Sigmoid colon (tissue), 7 donors: ENCODE measurements at regions of chr3 and their contacts with region 1.

Region 1: DNA sequence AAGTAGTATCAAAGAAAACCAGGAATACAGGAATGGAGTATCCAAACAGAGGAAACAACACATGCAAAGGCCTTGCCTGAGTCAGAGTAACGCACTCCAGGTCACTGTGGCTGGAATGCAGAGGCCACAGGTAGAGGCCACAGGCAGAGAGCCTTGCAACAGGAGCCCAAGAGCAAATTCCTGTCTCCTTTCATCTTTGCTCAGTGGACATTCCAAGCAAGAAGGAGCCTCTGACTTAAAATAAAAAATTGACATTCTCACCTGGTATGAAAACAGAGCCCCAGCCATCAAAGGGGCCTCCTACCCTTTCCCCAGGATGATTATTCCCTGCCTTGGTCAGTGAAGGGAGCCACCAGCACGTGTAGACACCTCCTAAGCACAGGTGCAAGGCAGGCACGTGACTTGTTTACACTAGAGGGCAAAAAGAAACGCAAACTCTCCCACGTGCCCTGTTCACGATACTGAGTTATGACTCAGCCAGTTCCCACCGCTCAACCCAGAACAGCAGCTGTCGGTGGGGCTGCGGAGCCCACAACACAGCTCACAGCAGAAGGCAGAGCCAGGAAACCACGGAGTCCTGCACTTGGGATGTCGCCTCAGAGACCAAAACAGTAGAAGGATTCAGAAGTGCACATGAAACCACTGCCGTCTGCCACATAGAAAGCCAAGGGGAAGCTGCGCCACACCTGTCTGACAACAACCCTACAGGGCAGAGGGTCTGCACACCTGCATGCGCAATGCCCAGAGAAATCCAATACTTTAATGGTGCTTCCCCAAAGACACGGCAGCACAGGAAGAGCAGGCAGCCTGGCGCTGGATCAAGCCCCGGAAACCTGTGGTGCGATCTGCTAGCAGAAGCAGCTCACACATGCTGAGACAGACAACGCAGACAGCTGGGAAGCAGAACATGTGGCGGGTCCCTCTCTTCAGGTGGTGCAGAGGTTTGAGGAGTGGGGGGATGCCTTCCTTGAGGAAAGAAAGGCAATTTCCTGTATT is 52.1 kb downstream of the ITGB5 start:
- DNase-seq: peak; percentile 78
- H3K4me3 ChIP-seq: peak overlapping the region in 1 of 4 donors; percentile 22
- H3K27ac ChIP-seq: peak overlapping the region; percentile 70 to 89 (median 76)
- H3K4me1 ChIP-seq: peaks cover 0 to 74% (median 56%) of the 10 kb centered on the region in 4 donors
- H3K27me3 ChIP-seq: no peaks in the 10 kb centered on the region
- CTCF ChIP-seq: no peak
- EP300 ChIP-seq: peak in 1 of 4 donors; percentile 35
- POLR2A ChIP-seq: no peak

Region 2: GRCh38 chr3:124559881-124560574 is 275.0 kb before region 1 on chr3:
- intact Hi-C with region 1: no loop called
- DNase-seq: peak; percentile 75
- H3K4me3 ChIP-seq: no peak overlapping the region
- H3K27ac ChIP-seq: peak overlapping the region; percentile 50 to 80 (median 70)
- H3K4me1 ChIP-seq: peaks cover 0 to 28% (median 22%) of the 10 kb centered on the region in 4 donors
- H3K27me3 ChIP-seq: no peaks in the 10 kb centered on the region
- CTCF ChIP-seq: peak; percentile 41 to 87 (median 66)
- EP300 ChIP-seq: no peak
- POLR2A ChIP-seq: no peak

Region 3: DNA sequence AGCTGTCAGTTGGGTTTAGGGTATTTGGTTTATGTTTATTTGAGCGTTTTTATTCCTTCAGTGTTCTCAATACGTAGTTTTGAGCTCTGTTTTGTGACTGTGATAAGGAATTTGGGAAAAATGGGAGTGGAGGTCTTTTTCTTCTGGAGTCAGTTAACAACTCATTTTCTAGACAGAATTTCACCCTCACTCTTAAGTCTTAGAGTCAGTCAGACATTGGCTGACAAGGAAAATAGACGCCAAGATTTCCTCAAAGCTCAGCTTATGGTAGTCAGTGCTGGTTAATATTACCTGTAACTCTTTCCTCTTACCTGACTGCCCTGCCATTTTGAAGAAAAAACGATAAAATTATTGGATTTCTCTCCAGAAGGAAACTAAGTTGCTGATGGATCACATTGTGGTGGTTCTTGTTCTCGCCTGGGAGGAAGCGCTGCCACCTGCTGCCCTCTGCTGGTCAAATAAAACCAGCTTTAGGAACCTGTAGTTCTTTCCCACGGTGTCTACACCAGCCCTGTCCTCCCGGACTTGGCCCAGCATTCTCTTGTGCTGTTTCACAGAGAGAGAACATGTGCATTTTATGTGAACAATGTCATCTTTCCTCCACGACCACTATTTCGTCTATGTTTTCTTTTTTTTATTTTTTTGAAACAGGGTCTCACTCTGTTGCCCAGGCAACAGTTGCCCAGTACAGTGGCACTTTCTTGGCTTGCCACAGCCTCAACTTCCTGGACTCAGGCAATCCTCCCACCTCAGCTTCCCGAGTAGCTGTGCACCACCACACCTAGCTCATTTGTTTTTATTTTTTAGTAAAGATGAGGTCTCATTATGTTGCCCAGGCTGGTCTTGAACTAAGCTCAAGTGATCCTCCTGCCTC is 146.2 kb before region 1 on chr3:
- intact Hi-C with region 1: no loop called
- DNase-seq: peak; percentile 83
- H3K4me3 ChIP-seq: no peak overlapping the region
- H3K27ac ChIP-seq: no peak overlapping the region
- H3K4me1 ChIP-seq: peaks cover 0 to 3% (median 0%) of the 10 kb centered on the region in 4 donors
- H3K27me3 ChIP-seq: no peaks in the 10 kb centered on the region
- CTCF ChIP-seq: peak; percentile 47 to 83 (median 68)
- EP300 ChIP-seq: no peak
- POLR2A ChIP-seq: no peak

Region 4: DNA sequence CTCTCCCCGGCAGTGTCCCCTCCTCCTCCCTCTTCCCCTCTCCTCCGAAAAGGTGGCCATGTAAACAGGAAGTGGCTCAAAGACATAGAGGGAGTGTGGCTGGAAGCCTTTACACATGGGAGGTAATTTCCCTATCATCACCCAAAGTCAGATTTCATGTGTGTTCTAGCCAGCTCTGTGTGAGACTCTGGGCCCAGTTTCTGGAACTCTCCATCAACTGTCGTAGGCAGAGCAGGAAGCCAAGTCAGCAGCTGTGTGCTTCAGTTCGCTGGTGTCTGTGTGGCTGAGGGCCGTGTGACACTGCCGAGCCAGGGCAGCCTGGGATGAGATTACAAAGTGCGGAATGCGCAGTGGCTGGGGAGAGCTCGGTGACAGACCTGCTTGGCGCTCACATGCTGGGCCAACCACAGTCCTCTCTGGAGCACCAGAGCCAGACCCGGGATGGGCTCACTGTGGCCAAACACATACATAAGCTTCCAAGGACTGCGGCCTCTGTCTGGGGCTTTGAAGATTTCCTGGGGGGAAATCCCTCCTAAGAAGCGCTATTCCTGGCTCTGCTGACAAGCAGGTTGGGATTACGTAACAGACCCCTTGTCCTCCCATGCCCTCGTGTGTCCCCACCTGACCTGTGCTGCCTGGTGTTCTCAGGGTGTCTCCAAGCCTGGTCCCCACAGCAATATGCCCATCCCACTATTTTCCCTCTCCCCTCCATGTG is 54.1 kb before region 1 on chr3:
- intact Hi-C with region 1: loop called (anchors 5 kb)
- DNase-seq: peak; percentile 91
- H3K4me3 ChIP-seq: peak overlapping the region in 1 of 4 donors; percentile 6
- H3K27ac ChIP-seq: peak overlapping the region; percentile 81 to 94 (median 92)
- H3K4me1 ChIP-seq: peaks cover 0 to 69% (median 62%) of the 10 kb centered on the region in 4 donors
- H3K27me3 ChIP-seq: no peaks in the 10 kb centered on the region
- CTCF ChIP-seq: no peak
- EP300 ChIP-seq: peak in 2 of 4 donors; percentile 28 to 48
- POLR2A ChIP-seq: no peak